ENCODE measurements at regions of chr6 and their contacts with region 1.

Region 1: DNA sequence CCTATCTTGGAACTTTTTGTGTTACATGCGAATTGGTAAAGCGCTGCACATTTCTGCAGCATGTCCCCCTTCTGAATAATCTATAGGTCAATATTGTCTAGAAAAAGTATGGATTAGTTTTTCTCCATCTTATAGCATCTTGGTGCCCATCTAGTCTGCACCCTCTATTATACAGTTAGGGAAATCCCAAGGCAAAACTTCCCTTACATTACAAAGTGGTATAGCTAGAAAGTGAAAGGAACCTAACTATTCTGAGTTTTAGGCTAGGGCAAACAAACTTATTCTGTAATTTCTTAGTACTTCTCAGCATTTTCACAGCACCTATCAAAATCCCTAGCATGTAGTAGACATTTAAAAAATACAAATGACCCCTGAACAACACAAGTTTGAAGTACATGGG is 133.5 kb upstream of the CCDC28A start:
- DNase-seq: no peak
- H3K4me3 ChIP-seq: no peak overlapping the region
- H3K27ac ChIP-seq: no peak overlapping the region
- H3K4me1 ChIP-seq: peaks cover 2% of the 10 kb centered on the region
- H3K27me3 ChIP-seq: no peaks in the 10 kb centered on the region
- CTCF ChIP-seq: no peak
- POLR2A ChIP-seq: no peak

Region 2: DNA sequence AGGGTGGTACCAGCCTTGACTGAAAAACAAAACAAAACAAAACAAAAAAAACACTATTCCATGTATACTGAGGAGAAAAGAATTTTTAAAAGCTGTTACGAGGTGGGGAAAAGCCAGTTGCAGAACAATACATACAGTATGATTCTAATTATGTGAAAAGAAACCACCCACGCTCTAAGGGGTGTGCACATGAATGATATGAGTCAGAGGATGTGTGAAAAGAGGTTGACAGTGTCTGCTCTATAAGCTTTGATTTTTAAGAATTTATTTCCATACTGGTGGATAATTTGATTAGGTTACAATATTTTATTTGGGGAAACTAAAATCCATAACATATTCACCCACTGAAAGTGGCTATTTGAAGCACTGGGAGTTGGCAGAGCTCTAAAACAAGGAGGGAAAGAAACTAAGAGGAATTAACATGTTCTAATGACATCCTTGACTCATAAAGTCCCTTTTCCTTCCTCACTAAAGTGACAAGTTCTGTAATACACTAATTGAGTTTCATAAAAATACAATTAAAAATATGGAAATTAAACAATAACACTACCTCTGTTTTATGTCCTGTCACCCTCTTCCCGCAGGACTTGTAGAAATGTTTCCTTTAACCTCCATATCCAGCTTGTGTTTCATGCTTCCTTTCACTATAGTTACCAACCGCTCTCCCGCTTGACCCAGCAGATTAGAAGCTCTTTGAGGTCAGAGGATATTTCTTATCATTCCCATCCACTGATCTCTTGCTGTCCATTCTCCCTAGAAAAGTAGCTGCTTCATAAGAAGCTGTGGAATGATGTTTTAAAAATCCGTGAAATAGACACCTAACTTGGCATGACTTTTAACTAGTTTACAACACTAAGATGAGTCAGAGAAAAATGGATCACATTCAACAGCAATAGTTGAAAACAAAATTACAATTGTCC is 14.9 kb after region 1 on chr6:
- CTCF ChIA-PET with region 1: interaction called, 14 read pairs
- POLR2A ChIA-PET with region 1: no interaction called
- dilution Hi-C with region 1: no loop called
- intact Hi-C with region 1: no loop called
- DNase-seq: peak; percentile 82
- H3K4me3 ChIP-seq: peak overlapping the region in 1 of 3 experiments; percentile 20
- H3K27ac ChIP-seq: peak overlapping the region; percentile 75
- H3K4me1 ChIP-seq: peaks cover 30% of the 10 kb centered on the region
- H3K27me3 ChIP-seq: no peaks in the 10 kb centered on the region
- CTCF ChIP-seq: no peak
- POLR2A ChIP-seq: no peak

Region 3: GRCh38 chr6:138912308-138912707 is 272.3 kb after region 1 on chr6:
- CTCF ChIA-PET with region 1: no interaction called
- POLR2A ChIA-PET with region 1: no interaction called
- dilution Hi-C with region 1: no loop called
- intact Hi-C with region 1: no loop called
- DNase-seq: no peak
- H3K4me3 ChIP-seq: no peak overlapping the region
- H3K27ac ChIP-seq: no peak overlapping the region
- H3K4me1 ChIP-seq: no peaks in the 10 kb centered on the region
- H3K27me3 ChIP-seq: no peaks in the 10 kb centered on the region
- CTCF ChIP-seq: no peak
- POLR2A ChIP-seq: no peak

Measured in endothelial cell of umbilical vein (primary cell).